ENCODE measurements at regions of chr9 and their contacts with region 1.

Region 1: GRCh38 chr9:38088006-38088925 is 19.2 kb upstream of the SHB start:
- DNase-seq: peak; percentile 33 to 99
- H3K4me3 ChIP-seq: no peak overlapping the region
- H3K27ac ChIP-seq: no peak overlapping the region
- H3K4me1 ChIP-seq: peaks cover 0 to 6% (median 4%) of the 10 kb centered on the region in 4 experiments; a peak in 6 of 7 replicates
- H3K27me3 ChIP-seq: no peaks in the 10 kb centered on the region; a peak in 1 of 7 replicates
- CTCF ChIP-seq: peak; percentile 90 to 98 (median 97)
- EP300 ChIP-seq: no peak
- POLR2A ChIP-seq: no peak
- RAD21 ChIP-seq: peak; percentile 85 to 92

Region 2: GRCh38 chr9:38017149-38017884 is 70.9 kb before region 1 on chr9:
- CTCF ChIA-PET with region 1: interaction called, 59 read pairs
- POLR2A ChIA-PET with region 1: no interaction called
- DNase-seq: peak; percentile 80 to 97
- H3K4me3 ChIP-seq: peak overlapping the region in 2 of 4 experiments; percentile 17 to 37; a peak in 2 of 8 replicates
- H3K27ac ChIP-seq: peak overlapping the region; percentile 83
- H3K4me1 ChIP-seq: peaks cover 31 to 60% (median 39%) of the 10 kb centered on the region in 4 experiments
- H3K27me3 ChIP-seq: no peaks in the 10 kb centered on the region
- CTCF ChIP-seq: peak; percentile 75 to 82 (median 80)
- EP300 ChIP-seq: peak; percentile 26 to 97
- POLR2A ChIP-seq: no peak; a peak in 1 of 3 replicates
- RAD21 ChIP-seq: peak; percentile 80 to 90

Region 3: GRCh38 chr9:38047301-38048251 is 40.7 kb before region 1 on chr9:
- CTCF ChIA-PET with region 1: interaction called, 10 read pairs
- POLR2A ChIA-PET with region 1: no interaction called
- DNase-seq: peak; percentile 63 to 69
- H3K4me3 ChIP-seq: peak overlapping the region in 1 of 4 experiments; percentile 13; a peak in 1 of 8 replicates
- H3K27ac ChIP-seq: peak overlapping the region; percentile 59; the same call in 1 of the 2 replicates
- H3K4me1 ChIP-seq: peaks cover 8 to 23% (median 18%) of the 10 kb centered on the region in 4 experiments
- H3K27me3 ChIP-seq: no peaks in the 10 kb centered on the region
- CTCF ChIP-seq: no peak
- EP300 ChIP-seq: no peak
- POLR2A ChIP-seq: peak in 1 of 2 experiments; percentile 45; a peak in 1 of 3 replicates
- RAD21 ChIP-seq: no peak

Region 4: GRCh38 chr9:38074441-38074961 is 13.8 kb before region 1 on chr9:
- CTCF ChIA-PET with region 1: interaction called, 36 read pairs
- POLR2A ChIA-PET with region 1: interaction called, 3 read pairs
- DNase-seq: no peak
- H3K4me3 ChIP-seq: no peak overlapping the region
- H3K27ac ChIP-seq: no peak overlapping the region
- H3K4me1 ChIP-seq: no peaks in the 10 kb centered on the region; a peak in 1 of 7 replicates
- H3K27me3 ChIP-seq: no peaks in the 10 kb centered on the region
- CTCF ChIP-seq: no peak
- EP300 ChIP-seq: no peak
- POLR2A ChIP-seq: no peak
- RAD21 ChIP-seq: no peak

Region 5: DNA sequence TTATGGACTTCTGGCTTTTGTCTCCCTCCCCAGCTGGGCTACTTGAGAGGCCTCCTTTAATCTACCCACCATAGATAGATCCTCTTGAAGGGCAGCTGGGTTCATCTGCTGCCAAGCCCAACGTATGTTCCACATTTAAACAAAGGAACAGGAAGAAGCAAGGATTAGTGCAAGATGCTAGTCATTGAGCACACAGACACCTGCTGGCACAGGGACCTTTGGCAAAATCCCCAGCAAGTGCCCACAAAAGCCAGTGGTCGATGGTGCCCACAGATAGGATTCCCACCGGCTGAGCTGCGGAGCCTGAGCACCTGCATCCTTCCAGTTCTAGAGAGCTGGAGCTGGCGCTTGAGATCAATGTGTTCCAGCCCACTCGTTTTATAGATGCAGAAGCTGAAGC is 38.5 kb after region 1 on chr9:
- CTCF ChIA-PET with region 1: interaction called, 17 read pairs
- POLR2A ChIA-PET with region 1: no interaction called
- DNase-seq: no peak
- H3K4me3 ChIP-seq: no peak overlapping the region
- H3K27ac ChIP-seq: no peak overlapping the region
- H3K4me1 ChIP-seq: no peaks in the 10 kb centered on the region
- H3K27me3 ChIP-seq: peaks cover 0 to 3% (median 0%) of the 10 kb centered on the region in 4 experiments; a peak in 1 of 7 replicates
- CTCF ChIP-seq: no peak
- EP300 ChIP-seq: no peak
- POLR2A ChIP-seq: no peak
- RAD21 ChIP-seq: no peak

Region 6: DNA sequence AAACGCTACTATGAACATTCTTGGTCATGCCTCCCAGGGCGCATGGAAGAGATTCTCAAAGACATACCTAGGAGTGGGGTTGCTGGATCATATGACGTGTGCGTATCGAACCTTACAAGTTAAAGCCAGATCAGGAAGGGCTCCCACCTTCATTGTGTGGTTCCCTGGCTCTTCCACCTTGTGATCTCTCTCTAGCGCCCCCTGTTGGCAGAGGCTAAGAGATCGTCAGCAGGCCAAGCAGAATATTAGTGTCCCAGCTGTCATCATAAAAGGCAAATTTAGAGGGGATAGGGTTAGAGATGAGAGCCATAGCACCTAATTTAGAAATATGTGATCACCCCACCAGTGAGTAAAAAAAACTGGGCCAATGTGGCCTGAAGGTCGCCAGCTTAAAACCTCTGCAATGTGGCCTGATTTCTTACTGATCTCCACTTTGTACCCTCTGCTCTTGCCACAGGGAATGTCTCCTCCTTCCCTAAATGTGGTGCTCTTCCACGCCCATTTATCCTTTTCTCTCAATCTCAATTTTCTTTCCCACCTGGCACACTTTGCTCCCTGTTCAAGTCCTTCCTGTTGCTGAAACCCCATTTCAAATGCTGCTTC is 72.4 kb after region 1 on chr9:
- CTCF ChIA-PET with region 1: interaction called, 44 read pairs
- POLR2A ChIA-PET with region 1: no interaction called
- DNase-seq: peak in 1 of 2 experiments; percentile 87
- H3K4me3 ChIP-seq: no peak overlapping the region
- H3K27ac ChIP-seq: no peak overlapping the region
- H3K4me1 ChIP-seq: no peaks in the 10 kb centered on the region
- H3K27me3 ChIP-seq: no peaks in the 10 kb centered on the region
- CTCF ChIP-seq: peak; percentile 76 to 91 (median 82)
- EP300 ChIP-seq: no peak
- POLR2A ChIP-seq: no peak
- RAD21 ChIP-seq: peak; percentile 74 to 83

Region 7: DNA sequence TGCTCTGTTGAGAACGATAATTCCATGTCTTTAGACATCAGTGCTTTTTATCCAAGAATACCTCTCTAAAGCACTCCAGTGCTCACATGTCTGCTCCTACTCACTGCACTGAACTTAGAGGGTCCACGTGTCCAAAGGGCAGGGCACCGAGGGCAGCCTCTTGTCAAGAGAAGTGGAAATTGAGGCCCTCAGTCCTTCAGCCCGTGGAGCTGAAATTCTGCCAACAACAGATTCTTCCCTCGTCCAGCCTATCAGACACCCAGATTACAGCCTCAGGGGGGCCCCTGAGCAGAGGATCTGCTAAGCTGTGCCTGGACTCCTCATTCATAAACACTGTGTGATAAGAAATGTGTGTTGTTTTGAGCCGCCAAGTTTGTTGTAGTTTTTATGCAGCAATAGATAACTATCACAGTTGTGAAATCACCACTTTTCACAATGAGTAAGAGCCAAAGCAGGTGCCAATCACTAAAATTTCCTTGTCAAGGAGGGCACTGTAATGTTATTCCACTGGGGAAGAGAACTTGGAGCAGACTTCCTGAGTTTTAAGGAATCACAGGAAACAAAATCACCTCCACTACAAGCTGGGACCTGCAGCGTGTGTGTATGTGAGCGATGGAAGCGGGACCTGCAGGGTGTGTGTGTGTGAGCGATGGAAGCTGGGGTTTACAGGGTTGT is 394.8 kb after region 1 on chr9:
- CTCF ChIA-PET with region 1: no interaction called
- POLR2A ChIA-PET with region 1: no interaction called
- DNase-seq: no peak
- H3K4me3 ChIP-seq: no peak overlapping the region
- H3K27ac ChIP-seq: peak overlapping the region; percentile 75; the same call in 1 of the 2 replicates
- H3K4me1 ChIP-seq: peaks cover 11 to 24% (median 21%) of the 10 kb centered on the region in 4 experiments
- H3K27me3 ChIP-seq: no peaks in the 10 kb centered on the region
- CTCF ChIP-seq: no peak
- EP300 ChIP-seq: no peak
- POLR2A ChIP-seq: no peak
- RAD21 ChIP-seq: no peak

Measured in H1 (cell line).